PC-3 (cell line): ENCODE measurements at regions of chrX and their contacts with region 1.

Region 1: DNA sequence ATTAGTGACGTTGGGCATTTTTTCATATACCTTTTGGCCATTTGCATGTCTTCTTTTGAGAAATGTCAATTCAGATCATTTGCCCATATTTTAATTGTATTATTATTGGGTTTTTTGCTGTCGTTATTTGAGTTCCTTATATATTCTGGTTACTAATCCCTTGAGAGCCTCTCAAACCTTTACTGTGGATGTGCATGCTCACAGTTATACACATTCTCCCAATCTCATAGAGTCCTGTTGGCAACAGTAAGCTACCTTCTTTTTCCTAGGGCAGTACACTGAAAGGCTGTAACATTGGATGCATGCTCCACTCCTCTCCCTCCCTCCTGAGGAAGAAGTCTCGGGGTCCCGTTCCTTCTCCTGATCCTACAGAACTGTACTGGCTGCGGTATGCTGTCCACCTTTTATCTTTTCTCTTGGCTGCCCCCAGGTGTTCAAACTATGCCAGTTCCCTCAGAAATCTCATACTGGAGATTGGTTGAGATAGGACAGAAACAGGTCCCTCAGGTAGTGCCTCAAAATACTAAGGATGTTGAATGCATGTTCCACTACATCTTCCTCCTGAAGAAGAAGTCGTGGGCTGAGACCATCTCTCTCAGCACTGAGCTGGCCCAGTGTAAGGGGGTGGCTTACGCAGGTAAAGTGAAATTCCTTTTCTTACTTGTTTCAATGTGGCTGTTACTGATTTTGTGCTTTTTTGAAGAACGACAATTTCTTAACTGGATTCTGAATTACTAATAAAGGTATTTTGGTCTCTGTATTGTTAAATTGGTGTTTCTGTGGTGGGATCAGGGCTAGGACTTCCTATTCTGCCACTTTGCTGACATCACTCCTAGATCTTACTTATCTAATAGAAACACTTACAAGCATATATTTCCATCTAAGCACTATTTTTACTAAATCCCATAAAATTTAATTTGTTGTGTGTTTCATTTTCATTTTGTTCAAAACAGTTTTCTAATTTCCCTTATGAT is 145.4 kb upstream of the HUWE1 start:
- DNase-seq: peak; percentile 81
- ATAC-seq: peak; percentile 89
- H3K4me3 ChIP-seq: no peak overlapping the region
- H3K27ac ChIP-seq: no peak overlapping the region
- H3K4me1 ChIP-seq: no peaks in the 10 kb centered on the region
- H3K27me3 ChIP-seq: no peaks in the 10 kb centered on the region
- CTCF ChIP-seq: peak; percentile 76

Region 2: GRCh38 chrX:53674581-53674980 is 157.4 kb before region 1 on chrX:
- CTCF ChIA-PET with region 1: no interaction called
- POLR2A ChIA-PET with region 1: no interaction called
- intact Hi-C with region 1: loop called (anchors 5 kb)
- DNase-seq: peak; percentile 19
- ATAC-seq: peak; percentile 75
- H3K4me3 ChIP-seq: no peak overlapping the region
- H3K27ac ChIP-seq: no peak overlapping the region
- H3K4me1 ChIP-seq: peaks cover 8% of the 10 kb centered on the region; the same call in 1 of the 2 replicates
- H3K27me3 ChIP-seq: no peaks in the 10 kb centered on the region
- CTCF ChIP-seq: no peak

Region 3: GRCh38 chrX:53683556-53684414 is 148.2 kb before region 1 on chrX:
- CTCF ChIA-PET with region 1: no interaction called
- POLR2A ChIA-PET with region 1: no interaction called
- intact Hi-C with region 1: loop called (anchors 1 kb)
- DNase-seq: peak; percentile 99
- ATAC-seq: peak; percentile 70
- H3K4me3 ChIP-seq: peak overlapping the region; percentile 96
- H3K27ac ChIP-seq: peak overlapping the region; percentile 87
- H3K4me1 ChIP-seq: peaks cover 17% of the 10 kb centered on the region
- H3K27me3 ChIP-seq: no peaks in the 10 kb centered on the region
- CTCF ChIP-seq: no peak